Activated CD8-positive, alpha-beta T cell treated with anti-CD3 and anti-CD28 coated beads, Interleukin-2, amount 10 ng/mL, durations not matched to agents 7 days and 5 days (primary cell): ENCODE measurements at regions of chr15 and their contacts with region 1.

Region 1: DNA sequence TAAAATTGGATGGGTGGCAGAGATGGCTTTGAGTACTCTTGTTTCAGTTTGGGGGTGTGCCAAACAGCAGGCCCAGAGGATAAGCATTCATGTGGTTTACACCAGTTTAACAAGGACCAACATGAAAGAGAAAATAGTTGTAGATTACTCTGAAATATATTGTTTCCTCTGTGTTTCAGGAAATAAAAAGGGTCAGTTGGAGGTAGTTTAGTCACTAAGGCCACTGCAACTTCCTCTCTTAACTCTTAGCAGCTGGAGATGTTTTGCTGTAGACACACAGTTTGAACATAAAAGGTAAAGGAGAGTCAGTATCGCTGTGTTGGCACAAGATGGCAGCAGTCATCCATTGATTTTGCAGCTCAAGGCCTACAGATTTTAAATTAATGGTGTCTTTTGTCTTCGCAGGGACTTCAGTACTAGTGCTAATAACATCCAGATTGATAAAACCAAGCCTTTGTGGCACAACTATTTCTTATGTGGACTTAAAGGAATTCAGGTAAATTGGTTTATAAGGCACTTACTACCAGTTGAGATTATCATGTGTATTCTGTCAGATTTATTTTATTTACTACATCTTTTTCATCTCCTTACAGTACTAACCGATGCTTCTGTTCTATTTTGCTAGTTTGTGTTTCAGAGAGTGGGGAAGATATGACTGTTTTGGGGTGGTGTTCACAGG is 65.5 kb downstream of the GALK2 start:
- DNase-seq: peak; percentile 75
- ATAC-seq: peak; percentile 86
- H3K4me3 Mint-ChIP-seq: no peak overlapping the region
- H3K27ac Mint-ChIP-seq: peak overlapping the region; percentile 72
- H3K4me1 Mint-ChIP-seq: peaks cover 16% of the 10 kb centered on the region
- H3K27me3 Mint-ChIP-seq: no peaks in the 10 kb centered on the region

Region 2: DNA sequence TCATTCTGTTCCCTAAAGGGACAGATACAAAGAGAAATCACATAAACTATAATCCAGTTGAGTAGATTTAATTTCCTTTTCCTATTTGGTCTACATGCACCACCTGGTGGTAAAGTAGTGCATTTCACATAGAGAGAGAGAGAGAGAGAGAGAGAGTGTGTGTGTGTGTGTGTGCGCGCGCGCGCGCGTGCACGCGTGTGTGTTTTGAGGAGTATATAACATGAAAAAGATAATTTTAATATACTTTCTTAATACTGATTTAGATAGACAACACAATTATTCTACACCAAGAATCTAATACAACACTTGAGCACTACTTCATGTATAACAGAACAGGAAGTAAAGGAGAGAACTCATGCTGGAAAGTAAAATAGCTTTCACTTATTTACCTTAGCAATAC is 186.4 kb after region 1 on chr15:
- CTCF ChIA-PET with region 1: interaction called, 96 read pairs
- POLR2A ChIA-PET with region 1: interaction called, 4 read pairs
- DNase-seq: peak; percentile 48
- ATAC-seq: no peak
- H3K4me3 Mint-ChIP-seq: no peak overlapping the region
- H3K27ac Mint-ChIP-seq: peak overlapping the region; percentile 32
- H3K4me1 Mint-ChIP-seq: peaks cover 3% of the 10 kb centered on the region
- H3K27me3 Mint-ChIP-seq: peaks cover 4% of the 10 kb centered on the region

Region 3: GRCh38 chr15:50145451-50145872 is 909.9 kb after region 1 on chr15:
- CTCF ChIA-PET with region 1: interaction called, 15 read pairs
- POLR2A ChIA-PET with region 1: no interaction called
- DNase-seq: no peak
- ATAC-seq: peak; percentile 47
- H3K4me3 Mint-ChIP-seq: no peak overlapping the region
- H3K27ac Mint-ChIP-seq: no peak overlapping the region
- H3K4me1 Mint-ChIP-seq: peaks cover 35% of the 10 kb centered on the region
- H3K27me3 Mint-ChIP-seq: no peaks in the 10 kb centered on the region